IMR-90 (cell line): ENCODE measurements at regions of chr1 and their contacts with region 1.

Region 1: GRCh38 chr1:171741872-171742576 is at the start of gene VAMP4:
- DNase-seq: peak; percentile 76
- ATAC-seq: peak; percentile 86
- H3K4me3 ChIP-seq: peak within 1 kb of the TSS; percentile 92
- H3K27ac ChIP-seq: peak within 1 kb of the TSS; percentile 98
- H3K4me1 ChIP-seq: peaks cover 8% of the 10 kb centered on the region; the same call in 1 of the 2 replicates
- H3K27me3 ChIP-seq: no peaks in the 10 kb centered on the region
- CTCF ChIP-seq: no peak
- POLR2A ChIP-seq: peak; percentile 78
- RAD21 ChIP-seq: no peak
- total RNA-seq, gene VAMP4: 3.4 and 7.5 TPM in 2 replicates

Region 2: DNA sequence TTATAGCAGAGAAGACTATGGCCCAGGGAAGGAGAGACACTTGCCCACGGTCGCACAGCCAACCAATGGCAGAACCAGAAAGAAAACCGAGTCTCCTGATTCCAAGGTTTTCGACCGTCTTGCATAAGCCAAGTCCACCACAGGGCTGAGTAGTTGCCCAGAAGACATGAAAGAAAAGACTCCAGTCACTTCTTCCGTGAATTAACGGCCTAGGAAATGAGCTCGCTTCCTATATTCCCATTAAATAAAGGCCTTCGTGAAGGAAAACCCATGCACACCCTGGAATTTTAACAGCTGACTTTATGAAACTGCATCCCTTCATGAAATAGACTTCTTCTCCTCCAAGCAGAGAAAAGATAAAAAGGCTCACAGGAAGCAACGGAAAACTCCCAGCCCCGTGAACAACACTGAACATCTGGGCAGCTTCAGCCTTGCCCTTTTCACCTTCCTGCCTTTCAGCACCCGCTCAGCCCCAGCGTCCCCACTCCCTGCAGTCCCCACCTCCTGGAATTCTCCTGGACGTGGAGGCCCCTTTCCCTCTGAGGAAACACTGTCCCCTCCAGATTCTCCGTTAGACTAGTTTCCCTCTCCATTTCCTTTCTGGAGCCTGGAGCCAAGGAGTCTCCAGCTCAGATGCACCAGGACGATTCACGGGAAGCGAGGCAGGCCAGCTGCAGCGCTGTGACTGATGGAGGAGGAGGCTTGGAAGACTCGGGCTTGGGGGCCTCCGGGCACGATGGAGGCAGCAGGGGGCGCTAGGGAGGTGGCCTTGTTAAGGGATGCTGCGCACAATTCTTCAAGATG is 86.9 kb before region 1 on chr1:
- CTCF ChIA-PET with region 1: no interaction called
- POLR2A ChIA-PET with region 1: interaction called, 11 read pairs
- dilution Hi-C with region 1: no loop called
- in situ Hi-C with region 1: no loop called
- intact Hi-C with region 1: no loop called
- DNase-seq: peak; percentile 48
- ATAC-seq: peak; percentile 76
- H3K4me3 ChIP-seq: no peak overlapping the region
- H3K27ac ChIP-seq: no peak overlapping the region
- H3K4me1 ChIP-seq: peaks cover 8% of the 10 kb centered on the region
- H3K27me3 ChIP-seq: peaks cover 3% of the 10 kb centered on the region
- CTCF ChIP-seq: peak; percentile 58
- POLR2A ChIP-seq: no peak
- RAD21 ChIP-seq: peak; percentile 46

Region 3: GRCh38 chr1:171754353-171754705 is 12.3 kb after region 1 on chr1:
- CTCF ChIA-PET with region 1: no interaction called
- POLR2A ChIA-PET with region 1: interaction called, 16 read pairs
- dilution Hi-C with region 1: no loop called
- in situ Hi-C with region 1: no loop called
- intact Hi-C with region 1: no loop called
- DNase-seq: peak; percentile 86
- ATAC-seq: peak; percentile 92
- H3K4me3 ChIP-seq: no peak overlapping the region
- H3K27ac ChIP-seq: peak overlapping the region; percentile 97
- H3K4me1 ChIP-seq: peaks cover 14% of the 10 kb centered on the region
- H3K27me3 ChIP-seq: no peaks in the 10 kb centered on the region
- CTCF ChIP-seq: no peak
- POLR2A ChIP-seq: no peak
- RAD21 ChIP-seq: no peak

Region 4: DNA sequence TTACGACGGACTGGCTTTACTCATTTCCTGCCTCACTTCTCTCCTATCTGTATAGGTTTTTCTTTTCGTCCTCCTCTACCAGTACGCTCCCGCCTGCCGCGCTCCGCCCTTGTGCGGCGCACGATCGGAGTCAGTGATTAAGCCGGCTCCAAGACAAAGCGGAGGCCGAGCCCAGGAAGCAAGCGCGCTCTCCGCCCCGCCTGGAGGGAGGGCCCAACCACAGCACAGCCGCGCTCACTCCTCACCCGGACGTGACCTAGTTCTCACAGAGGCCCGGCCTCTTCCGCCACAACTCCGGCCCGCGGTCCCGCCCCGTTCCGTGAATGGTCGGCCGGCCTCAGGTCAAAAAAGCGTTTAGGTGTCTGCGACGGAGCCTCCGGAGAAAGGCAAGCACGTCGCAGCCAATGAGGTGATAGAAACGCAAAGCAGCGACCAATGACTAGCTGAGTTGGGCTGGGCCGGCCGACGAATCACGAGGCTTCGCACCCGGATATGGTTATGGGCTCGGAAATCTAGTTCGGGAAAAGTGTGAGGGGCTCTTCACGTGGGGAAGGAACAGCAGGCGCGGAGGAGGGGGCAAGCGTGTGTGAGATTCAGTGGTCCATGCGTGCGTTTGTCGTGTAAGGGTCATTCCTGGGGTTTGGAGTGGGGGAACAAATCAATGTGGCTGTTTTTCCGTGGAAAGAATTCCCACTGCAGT is 39.3 kb after region 1 on chr1 and contains the start of gene METTL13:
- CTCF ChIA-PET with region 1: no interaction called
- POLR2A ChIA-PET with region 1: interaction called, 9 read pairs
- dilution Hi-C with region 1: no loop called
- in situ Hi-C with region 1: no loop called
- intact Hi-C with region 1: loop called (anchors 1 kb)
- DNase-seq: peak; percentile 99
- ATAC-seq: peak; percentile 98
- H3K4me3 ChIP-seq: peak within 1 kb of the TSS; percentile 81
- H3K27ac ChIP-seq: peak within 1 kb of the TSS; percentile 77
- H3K4me1 ChIP-seq: no peaks in the 10 kb centered on the region
- H3K27me3 ChIP-seq: no peaks in the 10 kb centered on the region
- CTCF ChIP-seq: 0 out of 2 replicates have a peak, but pooled peaks have one; percentile 6
- POLR2A ChIP-seq: peak; percentile 87
- RAD21 ChIP-seq: 0 out of 2 replicates have a peak, but pooled peaks have one; percentile 9
- total RNA-seq, gene METTL13: 25.8 and 26.3 TPM in 2 replicates

Region 5: DNA sequence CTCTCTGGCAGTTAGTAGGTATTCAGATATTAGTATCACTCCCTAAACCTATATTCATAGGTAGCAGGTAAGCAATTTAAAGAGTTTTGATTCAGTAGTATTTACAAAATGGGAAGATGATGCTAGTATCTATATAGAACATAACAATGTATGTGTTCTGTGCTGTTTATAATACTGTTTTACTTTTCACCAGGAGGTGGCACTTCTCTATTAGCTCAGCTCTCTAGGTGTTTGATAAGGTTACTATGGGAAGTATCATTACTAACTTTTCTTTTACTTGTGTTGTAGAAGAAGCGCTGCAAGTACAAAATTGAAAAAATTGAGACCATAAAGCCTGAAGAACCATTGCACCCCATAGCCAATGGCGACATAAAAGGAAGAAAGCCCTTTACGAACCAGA is 867.5 kb after region 1 on chr1:
- CTCF ChIA-PET with region 1: no interaction called
- POLR2A ChIA-PET with region 1: no interaction called
- dilution Hi-C with region 1: no loop called
- in situ Hi-C with region 1: no loop called
- intact Hi-C with region 1: no loop called
- DNase-seq: no peak
- ATAC-seq: no peak
- H3K4me3 ChIP-seq: no peak overlapping the region
- H3K27ac ChIP-seq: no peak overlapping the region
- H3K4me1 ChIP-seq: 0 out of 2 replicates have a peak, but pooled peaks cover 2% of the 10 kb centered on the region
- H3K27me3 ChIP-seq: no peaks in the 10 kb centered on the region
- CTCF ChIP-seq: peak; percentile 39; the same call in 1 of the 2 replicates
- POLR2A ChIP-seq: no peak
- RAD21 ChIP-seq: peak; percentile 43